ENCODE measurements at regions of chr15 and their contacts with region 1.

Region 1: GRCh38 chr15:86267892-86268291 is 188.2 kb downstream of the AGBL1 start:
- DNase-seq: no peak
- H3K4me3 ChIP-seq: no peak overlapping the region
- H3K27ac ChIP-seq: no peak overlapping the region
- H3K4me1 ChIP-seq: no peaks in the 10 kb centered on the region
- H3K27me3 ChIP-seq: no peaks in the 10 kb centered on the region
- CTCF ChIP-seq: no peak

Region 2: GRCh38 chr15:86362555-86362954 is 94.7 kb after region 1 on chr15:
- CTCF ChIA-PET with region 1: no interaction called
- dilution Hi-C with region 1: no loop called
- in situ Hi-C with region 1: loop called in 1 of 2 experiments (anchors 25 kb)
- intact Hi-C with region 1: no loop called
- DNase-seq: peak; percentile 98
- H3K4me3 ChIP-seq: no peak overlapping the region
- H3K27ac ChIP-seq: peak overlapping the region; percentile 75
- H3K4me1 ChIP-seq: peaks cover 16% of the 10 kb centered on the region
- H3K27me3 ChIP-seq: no peaks in the 10 kb centered on the region
- CTCF ChIP-seq: no peak

Region 3: DNA sequence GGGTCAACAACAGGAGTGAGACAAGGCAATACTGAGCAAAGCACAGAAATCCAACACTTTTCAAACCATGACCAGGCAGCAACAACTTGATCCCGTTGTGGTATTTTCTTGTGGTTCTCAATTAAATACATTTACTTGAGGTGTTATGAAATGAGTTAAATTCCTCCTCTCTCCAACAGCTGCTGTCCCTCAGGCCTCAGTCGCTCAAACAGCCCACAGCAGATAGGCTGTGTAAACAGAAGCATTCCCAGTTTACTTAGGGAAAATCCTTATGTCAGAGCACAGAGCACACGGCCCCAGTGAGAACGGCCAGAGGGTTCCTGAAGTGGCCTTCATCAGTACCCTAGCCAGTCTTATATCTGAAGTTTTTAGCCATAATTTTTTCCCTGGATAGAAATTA is 171.7 kb after region 1 on chr15:
- CTCF ChIA-PET with region 1: no interaction called
- dilution Hi-C with region 1: no loop called
- in situ Hi-C with region 1: no loop called
- intact Hi-C with region 1: no loop called
- DNase-seq: no peak
- H3K4me3 ChIP-seq: no peak overlapping the region
- H3K27ac ChIP-seq: no peak overlapping the region
- H3K4me1 ChIP-seq: no peaks in the 10 kb centered on the region
- H3K27me3 ChIP-seq: no peaks in the 10 kb centered on the region
- CTCF ChIP-seq: no peak

Measured in mammary epithelial cell (primary cell).